Prostate gland (tissue), 2 donors: ENCODE measurements at regions of chr1 and their contacts with region 1.

Region 1: GRCh38 chr1:26677306-26678115 is 18.3 kb upstream of the ARID1A start:
- DNase-seq: peak; percentile 92
- H3K4me3 ChIP-seq: no peak overlapping the region
- H3K27ac ChIP-seq: peak overlapping the region; percentile 18 to 46
- H3K4me1 ChIP-seq: no peaks in the 10 kb centered on the region
- H3K27me3 ChIP-seq: no peaks in the 10 kb centered on the region
- CTCF ChIP-seq: peak; percentile 62 to 93 (median 82)
- POLR2A ChIP-seq: no peak

Region 2: GRCh38 chr1:26602378-26602959 is 75.0 kb before region 1 on chr1:
- intact Hi-C with region 1: loop called (anchors 5 kb)
- DNase-seq: peak; percentile 62
- H3K4me3 ChIP-seq: no peak overlapping the region
- H3K27ac ChIP-seq: no peak overlapping the region
- H3K4me1 ChIP-seq: peaks cover 2% of the 10 kb centered on the region
- H3K27me3 ChIP-seq: no peaks in the 10 kb centered on the region
- CTCF ChIP-seq: peak; percentile 71 to 97 (median 91)
- POLR2A ChIP-seq: no peak

Region 3: DNA sequence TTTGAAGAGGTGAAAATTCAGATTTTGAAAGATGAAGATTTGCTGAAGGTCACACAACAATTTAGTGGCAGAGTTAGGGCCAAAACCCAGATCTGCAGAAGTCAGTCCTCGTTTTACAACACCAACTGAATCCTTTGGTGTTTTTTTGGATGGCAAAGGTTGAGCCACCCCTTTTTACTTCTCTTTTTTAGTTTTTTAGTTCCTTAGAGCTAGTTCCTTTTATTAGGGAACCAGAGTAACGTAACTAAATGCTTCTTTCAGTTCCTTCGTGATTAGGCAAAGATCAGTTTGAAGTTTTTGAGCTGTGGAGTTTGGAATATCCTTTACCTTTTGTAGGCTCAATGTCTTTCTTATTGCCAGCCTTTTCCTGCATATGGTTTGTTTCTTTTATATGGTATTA is 49.6 kb before region 1 on chr1:
- intact Hi-C with region 1: no loop called
- DNase-seq: no peak
- H3K4me3 ChIP-seq: no peak overlapping the region
- H3K27ac ChIP-seq: no peak overlapping the region
- H3K4me1 ChIP-seq: no peaks in the 10 kb centered on the region
- H3K27me3 ChIP-seq: no peaks in the 10 kb centered on the region
- CTCF ChIP-seq: no peak
- POLR2A ChIP-seq: no peak